ENCODE measurements at regions of chr2 and their contacts with region 1.

Region 1: DNA sequence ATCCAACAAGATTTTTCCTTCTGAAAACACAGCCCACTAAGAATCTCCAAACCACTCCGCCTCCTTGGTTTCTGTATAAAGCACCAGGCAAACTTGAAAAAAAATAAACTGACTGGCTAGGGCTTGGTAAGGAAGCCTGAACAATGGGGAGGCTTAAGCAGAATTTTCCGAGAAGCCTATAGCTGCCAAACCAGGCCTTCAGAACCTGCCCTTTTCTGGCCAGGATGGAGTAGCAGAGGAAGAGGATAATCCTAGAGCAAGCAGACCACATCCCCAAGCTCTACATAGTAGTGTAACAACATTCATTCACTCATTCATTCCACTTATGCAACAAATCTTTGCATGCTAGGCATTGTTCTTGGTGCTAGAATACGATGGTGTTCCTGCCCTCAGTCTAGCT is 529.6 kb upstream of the ZEB2 start:
- DNase-seq: peak; percentile 39
- H3K4me3 ChIP-seq: no peak overlapping the region
- H3K27ac ChIP-seq: peak overlapping the region; percentile 98
- H3K4me1 ChIP-seq: peaks cover 37% of the 10 kb centered on the region
- H3K27me3 ChIP-seq: no peaks in the 10 kb centered on the region
- CTCF ChIP-seq: no peak

Region 2: DNA sequence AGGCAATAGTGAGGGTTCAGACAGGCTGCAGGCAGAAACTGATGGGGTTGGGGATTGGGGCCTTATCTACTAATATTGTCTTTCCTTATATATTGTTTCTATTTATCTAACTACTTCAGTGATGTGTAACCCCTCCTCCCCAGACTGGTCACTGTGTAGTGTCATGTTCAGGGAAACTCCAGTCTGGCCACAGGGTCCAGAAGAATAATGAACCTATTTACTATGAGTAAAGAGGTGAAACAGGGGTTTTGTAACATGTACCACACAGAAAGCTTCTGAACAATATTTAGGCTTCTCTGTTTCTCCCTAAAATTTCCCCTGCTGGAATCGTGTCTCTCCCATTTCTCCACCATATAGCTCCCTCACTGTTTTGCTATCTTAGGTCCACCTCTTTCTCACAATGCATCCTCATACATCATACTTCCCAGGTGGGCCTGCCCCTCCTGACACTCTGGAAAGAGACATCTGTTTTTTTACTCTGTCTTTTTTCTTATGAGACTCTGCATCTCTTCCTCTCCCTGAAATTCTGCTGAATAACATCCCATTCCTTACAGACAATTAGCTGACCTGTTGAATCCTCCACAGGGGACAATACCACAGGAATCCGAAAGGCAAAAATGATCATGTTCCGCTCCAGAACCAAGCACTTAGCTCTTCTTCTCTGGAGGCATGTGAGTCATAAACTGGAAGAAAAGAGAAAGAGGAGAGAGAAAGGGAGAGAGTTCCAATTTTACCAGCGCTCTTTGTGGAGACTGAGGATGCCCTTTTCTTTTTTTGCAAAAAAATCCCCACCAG is 684.3 kb before region 1 on chr2:
- CTCF ChIA-PET with region 1: no interaction called
- POLR2A ChIA-PET with region 1: no interaction called
- intact Hi-C with region 1: loop called (anchors 1 kb)
- DNase-seq: peak; percentile 58
- H3K4me3 ChIP-seq: no peak overlapping the region
- H3K27ac ChIP-seq: peak overlapping the region; percentile 33
- H3K4me1 ChIP-seq: peaks cover 20% of the 10 kb centered on the region
- H3K27me3 ChIP-seq: no peaks in the 10 kb centered on the region
- CTCF ChIP-seq: no peak

Region 3: DNA sequence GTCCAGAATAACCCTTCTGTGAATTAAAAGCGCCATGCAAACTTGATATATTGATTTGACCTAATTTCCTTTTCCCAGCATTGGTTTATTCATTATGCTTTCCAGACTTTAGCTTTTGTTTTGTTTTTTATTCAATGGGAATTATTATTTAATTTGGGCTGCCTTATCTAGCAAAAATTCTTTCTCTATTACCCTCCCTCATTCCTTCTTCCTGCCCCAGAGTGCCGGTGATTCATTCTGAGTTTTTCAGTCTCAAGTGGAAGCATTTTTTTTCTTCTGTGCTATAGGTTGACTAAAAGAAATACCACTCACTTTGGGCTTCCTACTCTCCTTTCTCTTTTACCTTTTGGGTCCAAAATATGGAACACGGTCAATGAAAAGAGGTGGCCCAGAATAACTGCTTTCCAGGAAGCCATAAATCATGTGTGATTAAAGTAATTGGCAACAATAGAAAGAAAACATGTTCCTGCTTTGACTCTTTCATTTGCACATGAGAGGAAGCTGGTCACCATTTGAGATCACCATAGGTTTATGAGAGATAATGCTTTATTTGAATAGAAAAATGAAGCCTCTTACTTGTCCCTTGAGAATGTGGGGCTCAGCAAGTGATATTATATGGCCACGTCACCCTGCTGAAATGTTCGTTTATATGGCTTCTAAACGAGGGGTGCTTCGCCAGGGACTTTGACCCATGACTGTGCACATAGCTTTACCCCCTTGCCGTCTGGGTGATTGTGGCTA is 106.8 kb before region 1 on chr2:
- CTCF ChIA-PET with region 1: no interaction called
- POLR2A ChIA-PET with region 1: no interaction called
- intact Hi-C with region 1: loop called (anchors 5 kb)
- DNase-seq: peak; percentile 55
- H3K4me3 ChIP-seq: no peak overlapping the region
- H3K27ac ChIP-seq: peak overlapping the region; percentile 72
- H3K4me1 ChIP-seq: peaks cover 70% of the 10 kb centered on the region
- H3K27me3 ChIP-seq: no peaks in the 10 kb centered on the region
- CTCF ChIP-seq: no peak

Region 4: GRCh38 chr2:145546091-145546490 is 496.6 kb after region 1 on chr2:
- CTCF ChIA-PET with region 1: interaction called, 4 read pairs
- POLR2A ChIA-PET with region 1: no interaction called
- intact Hi-C with region 1: loop called (anchors 1 kb)
- DNase-seq: peak; percentile 36
- H3K4me3 ChIP-seq: no peak overlapping the region
- H3K27ac ChIP-seq: peak overlapping the region; percentile 98
- H3K4me1 ChIP-seq: peaks cover 25% of the 10 kb centered on the region
- H3K27me3 ChIP-seq: no peaks in the 10 kb centered on the region
- CTCF ChIP-seq: peak; percentile 22; the same call in 1 of the 2 replicates

Region 5: DNA sequence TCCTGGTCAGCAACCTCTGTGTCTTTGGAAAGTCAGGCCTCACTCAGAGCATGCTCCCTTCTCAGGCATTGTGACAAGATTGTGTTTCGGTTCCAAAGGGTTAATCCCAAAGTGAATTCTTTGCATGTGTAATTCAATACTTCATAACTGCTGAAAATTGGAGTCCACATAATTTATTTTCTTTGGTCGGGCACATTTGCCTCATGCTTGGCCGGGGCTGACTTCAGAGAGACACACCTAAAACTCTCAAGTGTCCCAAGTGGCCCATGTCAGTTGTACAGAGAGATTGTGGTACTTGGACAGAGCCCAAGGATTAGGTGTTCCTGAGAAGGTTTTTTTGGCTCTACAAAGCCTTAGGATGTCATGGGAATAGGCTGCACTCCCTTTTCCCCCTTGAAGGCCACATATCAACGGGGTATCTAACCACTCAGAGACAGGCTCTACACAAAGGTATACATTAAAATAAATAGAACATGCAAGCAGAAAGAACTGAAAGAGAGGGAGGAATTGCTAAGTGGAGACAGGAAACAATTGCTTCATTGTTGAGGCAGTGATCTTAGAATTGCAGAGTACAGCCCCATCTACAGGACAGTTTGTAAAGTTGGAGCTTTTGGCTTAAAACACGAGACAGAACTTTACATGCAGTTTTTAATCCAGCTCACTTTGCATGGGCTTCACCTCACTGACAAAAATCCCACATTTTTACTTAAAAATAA is 702.8 kb after region 1 on chr2:
- CTCF ChIA-PET with region 1: interaction called, 4 read pairs
- POLR2A ChIA-PET with region 1: no interaction called
- intact Hi-C with region 1: loop called (anchors 1 kb)
- DNase-seq: peak; percentile 94
- H3K4me3 ChIP-seq: no peak overlapping the region
- H3K27ac ChIP-seq: peak overlapping the region; percentile 87
- H3K4me1 ChIP-seq: peaks cover 47% of the 10 kb centered on the region
- H3K27me3 ChIP-seq: no peaks in the 10 kb centered on the region
- CTCF ChIP-seq: peak; percentile 82

Region 6: DNA sequence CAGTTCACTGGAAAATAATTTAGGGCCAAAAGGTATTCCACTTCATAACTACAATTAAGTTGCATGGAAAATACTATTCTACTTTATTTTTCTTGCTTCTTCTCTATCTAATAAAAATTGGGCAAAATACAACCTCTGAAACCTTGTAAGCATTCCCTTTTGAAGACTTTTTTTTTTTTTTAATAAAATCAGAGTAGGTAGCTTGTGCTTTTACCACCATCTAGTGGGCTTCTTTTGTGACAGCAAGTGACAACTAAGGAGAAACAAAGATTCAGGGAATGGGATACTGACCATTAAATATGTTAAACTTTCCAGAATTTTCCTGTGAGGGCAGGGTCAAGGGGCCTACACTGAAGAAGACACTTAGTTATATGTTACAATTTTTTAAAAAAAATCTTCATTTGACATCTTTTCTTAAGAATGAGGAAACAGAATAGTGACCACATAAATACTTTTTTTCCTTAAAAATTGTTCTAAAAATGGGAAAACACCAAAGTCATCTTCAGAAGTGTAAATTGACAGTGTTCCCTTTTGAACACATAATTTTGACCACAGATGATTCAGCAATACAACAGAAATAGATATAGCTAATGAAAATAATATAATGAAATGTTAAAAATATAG is 1612.1 kb after region 1 on chr2:
- CTCF ChIA-PET with region 1: no interaction called
- POLR2A ChIA-PET with region 1: no interaction called
- intact Hi-C with region 1: loop called (anchors 5 kb)
- DNase-seq: peak; percentile 72
- H3K4me3 ChIP-seq: no peak overlapping the region
- H3K27ac ChIP-seq: no peak overlapping the region
- H3K4me1 ChIP-seq: peaks cover 5% of the 10 kb centered on the region
- H3K27me3 ChIP-seq: no peaks in the 10 kb centered on the region
- CTCF ChIP-seq: peak; percentile 80

Measured in A673 (cell line).